Cardiac septum (tissue), 1 donor: ENCODE measurements at regions of chr5 and their contacts with region 1.

Region 1: GRCh38 chr5:80487829-80488721 is at the start of gene FAM151B:
- DNase-seq: peak; percentile 94
- total RNA-seq, gene FAM151B: 2.1 TPM

Region 2: GRCh38 chr5:80339116-80339515 is 149.0 kb before region 1 on chr5:
- intact Hi-C with region 1: no loop called
- DNase-seq: no peak

Region 3: GRCh38 chr5:80503641-80504040 is 15.6 kb after region 1 on chr5:
- intact Hi-C with region 1: no loop called
- DNase-seq: no peak

Region 4: GRCh38 chr5:80554646-80555045 is 66.6 kb after region 1 on chr5:
- intact Hi-C with region 1: no loop called
- DNase-seq: no peak

Region 5: DNA sequence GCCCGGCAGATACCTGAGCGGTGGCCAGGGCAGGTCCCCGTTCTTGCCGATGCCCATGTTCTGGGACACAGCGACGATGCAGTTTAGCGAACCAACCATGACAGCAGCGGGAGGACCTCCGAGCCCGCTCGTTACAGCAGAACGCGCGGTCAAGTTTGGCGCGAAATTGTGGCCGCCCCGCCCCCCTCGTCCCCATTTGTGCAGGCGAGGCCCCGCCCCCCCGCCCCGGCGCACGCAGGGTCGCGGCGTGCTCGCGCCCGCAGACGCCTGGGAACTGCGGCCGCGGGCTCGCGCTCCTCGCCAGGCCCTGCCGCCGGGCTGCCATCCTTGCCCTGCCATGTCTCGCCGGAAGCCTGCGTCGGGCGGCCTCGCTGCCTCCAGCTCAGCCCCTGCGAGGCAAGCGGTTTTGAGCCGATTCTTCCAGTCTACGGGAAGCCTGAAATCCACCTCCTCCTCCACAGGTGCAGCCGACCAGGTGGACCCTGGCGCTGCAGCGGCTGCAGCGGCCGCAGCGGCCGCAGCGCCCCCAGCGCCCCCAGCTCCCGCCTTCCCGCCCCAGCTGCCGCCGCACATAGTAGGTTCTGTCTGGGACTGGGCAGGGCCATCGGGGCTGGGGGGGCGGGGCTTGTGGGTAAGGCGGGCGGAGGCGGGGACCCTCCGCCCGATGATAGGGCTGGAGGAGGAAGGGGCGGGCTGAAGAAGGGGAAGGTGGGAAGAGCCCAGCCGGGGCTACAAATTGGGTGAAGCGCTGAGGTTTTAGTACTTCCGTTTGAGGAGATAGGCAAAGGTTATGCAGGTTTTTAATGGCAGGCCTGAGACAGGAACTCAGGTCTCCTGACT is 166.5 kb after region 1 on chr5 and contains the starts of genes DHFR and MSH3:
- intact Hi-C with region 1: loop called (anchors 5 kb)
- DNase-seq: peak; percentile 93
- total RNA-seq, gene DHFR: 9.2 TPM
- total RNA-seq, gene MSH3: 9.4 TPM

Region 6: DNA sequence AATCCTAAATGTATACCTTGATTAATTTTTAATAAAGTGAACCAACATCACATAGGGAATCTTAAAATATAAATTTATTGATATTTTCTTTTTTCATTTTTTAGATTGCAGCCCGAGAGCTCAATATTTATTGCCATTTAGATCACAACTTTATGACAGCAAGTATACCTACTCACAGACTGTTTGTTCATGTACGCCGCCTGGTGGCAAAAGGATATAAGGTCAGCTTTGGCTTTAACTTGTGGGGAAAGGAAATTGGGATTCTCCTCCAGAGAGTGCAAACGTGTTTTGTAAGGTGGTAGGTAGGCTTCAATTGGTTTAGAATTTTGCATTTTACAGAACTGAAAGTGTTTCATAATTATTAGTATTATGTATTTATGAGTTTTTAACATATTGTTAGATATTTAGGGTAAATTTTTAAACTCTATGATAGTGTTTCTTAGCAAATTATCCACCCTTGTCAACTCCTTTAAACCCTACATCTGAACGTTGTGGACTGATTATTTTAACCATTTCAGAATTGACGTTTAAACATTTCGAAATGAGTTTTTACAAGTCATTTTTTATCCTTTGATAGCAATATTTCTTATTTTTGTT is 184.2 kb after region 1 on chr5:
- intact Hi-C with region 1: loop called (anchors 5 kb)
- DNase-seq: no peak

Region 7: GRCh38 chr5:80895523-80895922 is 407.4 kb after region 1 on chr5:
- intact Hi-C with region 1: no loop called
- DNase-seq: no peak